CD4-positive, alpha-beta memory T cell (primary cell): ENCODE measurements at regions of chr12 and their contacts with region 1.

Region 1: GRCh38 chr12:6867413-6868210 is at the start of gene TPI1:
- DNase-seq: peak; percentile 59 to 68 (median 62)
- H3K4me3 ChIP-seq: peak within 1 kb of the TSS; percentile 36 to 67
- H3K4me3 Mint-ChIP-seq: peak within 1 kb of the TSS; percentile 89 to 96 (median 92)
- H3K27ac ChIP-seq: peak within 1 kb of the TSS; percentile 69
- H3K27ac Mint-ChIP-seq: peak within 1 kb of the TSS; percentile 91 to 97 (median 93)
- H3K4me1 ChIP-seq: peaks cover 51% of the 10 kb centered on the region
- H3K4me1 Mint-ChIP-seq: peaks cover 33 to 58% (median 48%) of the 10 kb centered on the region in 4 donors
- H3K27me3 ChIP-seq: no peaks in the 10 kb centered on the region
- H3K27me3 Mint-ChIP-seq: no peaks in the 10 kb centered on the region
- total RNA-seq, gene TPI1: 155 to 164 TPM

Region 2: DNA sequence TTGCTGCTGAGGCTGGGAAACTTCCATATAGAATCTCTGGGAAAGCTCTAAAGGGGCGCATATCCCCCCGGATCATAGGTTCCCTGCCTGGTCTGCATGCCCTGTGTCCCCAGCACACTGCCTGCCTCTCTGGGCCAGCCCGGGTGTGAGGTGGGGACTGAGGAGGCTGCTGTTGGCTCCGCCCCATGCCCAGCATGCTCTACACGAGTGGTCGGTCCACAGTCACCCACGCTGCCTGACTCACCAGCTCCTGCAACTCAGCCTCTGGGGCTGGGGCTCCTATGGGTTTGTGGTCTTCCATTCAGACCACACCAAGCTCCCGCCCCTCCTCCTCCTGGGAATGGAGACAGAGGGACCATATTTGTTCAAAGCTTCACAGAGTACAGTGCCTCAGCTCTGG is 834.1 kb before region 1 on chr12:
- CTCF ChIA-PET with region 1: no interaction called
- POLR2A ChIA-PET with region 1: no interaction called
- intact Hi-C with region 1: no loop called
- DNase-seq: no peak
- H3K4me3 ChIP-seq: no peak overlapping the region
- H3K4me3 Mint-ChIP-seq: no peak overlapping the region
- H3K27ac ChIP-seq: no peak overlapping the region
- H3K27ac Mint-ChIP-seq: no peak overlapping the region
- H3K4me1 ChIP-seq: no peaks in the 10 kb centered on the region
- H3K4me1 Mint-ChIP-seq: no peaks in the 10 kb centered on the region
- H3K27me3 ChIP-seq: no peaks in the 10 kb centered on the region
- H3K27me3 Mint-ChIP-seq: peaks cover 4 to 6% of the 10 kb centered on the region in 2 donors

Region 3: GRCh38 chr12:6540181-6540877 is 327.3 kb before region 1 on chr12:
- CTCF ChIA-PET with region 1: no interaction called
- POLR2A ChIA-PET with region 1: no interaction called
- intact Hi-C with region 1: no loop called
- DNase-seq: peak; percentile 30 to 63 (median 33)
- H3K4me3 ChIP-seq: peak overlapping the region in 1 of 2 donors; percentile 22
- H3K4me3 Mint-ChIP-seq: peak overlapping the region in 7 of 8 donors; percentile 43 to 87 (median 80)
- H3K27ac ChIP-seq: peak overlapping the region; percentile 37
- H3K27ac Mint-ChIP-seq: peak overlapping the region; percentile 80 to 93 (median 89)
- H3K4me1 ChIP-seq: peaks cover 70% of the 10 kb centered on the region
- H3K4me1 Mint-ChIP-seq: peaks cover 31 to 61% (median 51%) of the 10 kb centered on the region in 4 donors
- H3K27me3 ChIP-seq: no peaks in the 10 kb centered on the region
- H3K27me3 Mint-ChIP-seq: no peaks in the 10 kb centered on the region

Region 4: DNA sequence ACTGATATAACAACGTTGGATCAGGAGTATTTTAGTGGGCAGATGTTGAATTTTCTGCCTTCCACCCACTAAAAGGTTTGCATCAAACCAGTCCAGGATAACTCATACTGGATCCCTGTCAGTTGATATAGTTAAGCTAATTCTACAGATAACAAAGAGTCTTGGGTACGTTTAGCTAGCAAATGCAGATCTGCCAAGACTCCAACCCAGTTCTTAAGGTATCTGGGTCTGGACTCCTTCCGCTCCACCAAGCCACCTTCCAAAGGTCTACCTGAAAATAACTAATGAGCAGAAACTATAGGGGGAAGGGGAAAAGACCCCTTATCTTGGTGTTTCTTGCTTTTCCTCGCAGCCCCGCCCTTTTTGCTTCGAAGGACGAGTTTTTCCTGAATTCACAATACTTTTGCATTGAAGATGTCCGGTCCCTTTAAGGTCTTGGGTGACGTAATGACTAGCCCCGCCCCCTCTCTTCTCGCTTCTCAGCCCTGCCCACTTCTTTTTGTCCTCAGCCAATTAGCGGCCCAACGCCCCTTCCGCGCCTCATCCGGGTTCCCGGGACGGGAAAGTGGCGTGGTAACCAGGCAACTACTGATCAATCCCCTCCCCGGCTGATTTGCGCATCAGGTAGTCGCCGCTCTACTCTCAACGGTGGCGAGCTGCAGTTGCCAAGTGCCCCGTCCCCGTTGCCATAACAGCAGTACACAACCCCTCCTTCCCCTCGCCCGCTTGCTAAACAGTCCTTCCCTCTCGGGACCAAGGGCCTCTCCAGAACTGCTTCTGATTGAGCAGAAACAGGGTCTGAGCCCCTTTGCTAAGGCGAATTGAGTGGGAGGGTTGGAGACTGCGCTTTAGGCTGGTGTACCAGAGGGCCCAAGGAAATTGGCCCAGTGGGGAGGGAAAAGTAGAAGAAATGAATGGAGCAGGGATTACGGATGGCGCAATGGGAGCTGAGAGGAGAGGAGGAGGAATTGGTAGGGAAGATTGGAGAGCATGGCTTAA is 37.0 kb after region 1 on chr12 and contains the start of gene LRRC23:
- CTCF ChIA-PET with region 1: interaction called, 45 read pairs
- POLR2A ChIA-PET with region 1: interaction called, 33 read pairs
- intact Hi-C with region 1: loop called (anchors 1 kb)
- DNase-seq: peak; percentile 97 to 99 (median 98)
- H3K4me3 ChIP-seq: peak within 1 kb of the TSS; percentile 74 to 95
- H3K4me3 Mint-ChIP-seq: no peak within 1 kb of the TSS
- H3K27ac ChIP-seq: peak within 1 kb of the TSS; percentile 86
- H3K27ac Mint-ChIP-seq: no peak within 1 kb of the TSS
- H3K4me1 ChIP-seq: peaks cover 19% of the 10 kb centered on the region
- H3K4me1 Mint-ChIP-seq: peaks cover 0 to 8% (median 6%) of the 10 kb centered on the region in 4 donors
- H3K27me3 ChIP-seq: no peaks in the 10 kb centered on the region
- H3K27me3 Mint-ChIP-seq: no peaks in the 10 kb centered on the region
- total RNA-seq, gene LRRC23: 8.3 to 9.1 TPM

Region 5: GRCh38 chr12:6959058-6959804 is 91.6 kb after region 1 on chr12:
- CTCF ChIA-PET with region 1: interaction called, 14 read pairs
- POLR2A ChIA-PET with region 1: interaction called, 51 read pairs
- intact Hi-C with region 1: no loop called
- DNase-seq: peak; percentile 83 to 91 (median 85)
- H3K4me3 ChIP-seq: peak overlapping the region; percentile 47 to 58
- H3K4me3 Mint-ChIP-seq: peak overlapping the region; percentile 85 to 97 (median 94)
- H3K27ac ChIP-seq: peak overlapping the region; percentile 96
- H3K27ac Mint-ChIP-seq: peak overlapping the region; percentile 98 to 100 (median 99)
- H3K4me1 ChIP-seq: peaks cover 94% of the 10 kb centered on the region
- H3K4me1 Mint-ChIP-seq: peaks cover 62 to 89% (median 76%) of the 10 kb centered on the region in 4 donors
- H3K27me3 ChIP-seq: no peaks in the 10 kb centered on the region
- H3K27me3 Mint-ChIP-seq: no peaks in the 10 kb centered on the region

Region 6: DNA sequence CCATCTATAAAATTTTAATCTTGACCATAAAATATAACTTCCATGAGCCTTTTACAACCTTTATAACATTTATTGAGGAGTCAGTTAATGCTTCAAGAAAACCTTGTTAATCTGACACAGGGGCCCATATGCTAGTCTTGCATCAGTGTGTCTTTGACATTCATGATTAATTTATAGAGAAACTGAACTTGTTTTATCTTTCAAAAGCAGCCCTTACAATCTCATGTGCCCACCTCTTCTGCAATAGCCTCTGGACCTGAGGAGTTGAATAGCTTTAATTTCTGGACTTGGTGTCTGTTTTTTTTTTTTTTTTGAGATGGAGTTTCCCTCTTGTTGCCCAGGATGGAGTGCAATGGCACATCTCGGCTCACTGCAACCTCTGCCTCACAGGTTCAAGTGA is 159.2 kb after region 1 on chr12:
- CTCF ChIA-PET with region 1: no interaction called
- POLR2A ChIA-PET with region 1: no interaction called
- intact Hi-C with region 1: no loop called
- DNase-seq: no peak
- H3K4me3 ChIP-seq: no peak overlapping the region
- H3K4me3 Mint-ChIP-seq: no peak overlapping the region
- H3K27ac ChIP-seq: no peak overlapping the region
- H3K27ac Mint-ChIP-seq: no peak overlapping the region
- H3K4me1 ChIP-seq: no peaks in the 10 kb centered on the region
- H3K4me1 Mint-ChIP-seq: no peaks in the 10 kb centered on the region
- H3K27me3 ChIP-seq: no peaks in the 10 kb centered on the region
- H3K27me3 Mint-ChIP-seq: no peaks in the 10 kb centered on the region